ENCODE measurements at regions of chr1 and their contacts with region 1.

Region 1: GRCh38 chr1:64136752-64137411 is 66.5 kb upstream of the UBE2U start:
- DNase-seq: peak; percentile 49 to 93
- H3K4me3 ChIP-seq: no peak overlapping the region
- H3K27ac ChIP-seq: no peak overlapping the region
- H3K4me1 ChIP-seq: no peaks in the 10 kb centered on the region
- H3K27me3 ChIP-seq: no peaks in the 10 kb centered on the region
- CTCF ChIP-seq: peak; percentile 57 to 92 (median 72)
- EP300 ChIP-seq: no peak
- POLR2A ChIP-seq: no peak
- RAD21 ChIP-seq: peak; percentile 87 to 90

Region 2: DNA sequence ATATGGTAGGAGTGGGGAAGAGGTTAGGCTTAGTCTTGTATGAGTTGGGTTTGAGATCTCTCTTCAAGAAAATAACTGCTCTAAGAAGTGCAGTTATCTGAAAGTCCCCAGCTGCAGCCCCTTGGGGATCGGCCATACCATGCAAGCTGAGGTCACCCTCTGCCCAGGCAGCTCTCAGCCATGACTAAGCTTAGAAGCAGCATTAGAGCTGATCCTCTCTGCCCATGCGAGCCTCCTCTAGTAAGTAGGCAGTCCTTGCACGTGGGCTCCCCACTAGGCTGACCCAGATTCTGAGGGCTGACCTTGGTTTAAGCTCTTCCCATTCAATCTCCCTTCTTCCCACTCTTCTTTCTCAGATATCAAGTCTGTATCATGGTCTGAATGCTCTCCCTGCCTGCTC is 54.4 kb before region 1 on chr1:
- CTCF ChIA-PET with region 1: interaction called, 12 read pairs
- POLR2A ChIA-PET with region 1: no interaction called
- DNase-seq: peak in 1 of 2 experiments; percentile 10
- H3K4me3 ChIP-seq: no peak overlapping the region
- H3K27ac ChIP-seq: no peak overlapping the region
- H3K4me1 ChIP-seq: peaks cover 0 to under 1% (median 0%) of the 10 kb centered on the region in 4 experiments; a peak in 1 of 7 replicates
- H3K27me3 ChIP-seq: no peaks in the 10 kb centered on the region
- CTCF ChIP-seq: no peak
- EP300 ChIP-seq: no peak
- POLR2A ChIP-seq: no peak
- RAD21 ChIP-seq: no peak

Region 3: GRCh38 chr1:64116537-64116936 is 20.3 kb before region 1 on chr1:
- CTCF ChIA-PET with region 1: interaction called, 12 read pairs
- POLR2A ChIA-PET with region 1: no interaction called
- DNase-seq: no peak
- H3K4me3 ChIP-seq: no peak overlapping the region
- H3K27ac ChIP-seq: no peak overlapping the region
- H3K4me1 ChIP-seq: peaks cover 0 to 4% (median 0%) of the 10 kb centered on the region in 4 experiments; a peak in 2 of 7 replicates
- H3K27me3 ChIP-seq: no peaks in the 10 kb centered on the region
- CTCF ChIP-seq: no peak
- EP300 ChIP-seq: no peak
- POLR2A ChIP-seq: no peak
- RAD21 ChIP-seq: no peak

Region 4: DNA sequence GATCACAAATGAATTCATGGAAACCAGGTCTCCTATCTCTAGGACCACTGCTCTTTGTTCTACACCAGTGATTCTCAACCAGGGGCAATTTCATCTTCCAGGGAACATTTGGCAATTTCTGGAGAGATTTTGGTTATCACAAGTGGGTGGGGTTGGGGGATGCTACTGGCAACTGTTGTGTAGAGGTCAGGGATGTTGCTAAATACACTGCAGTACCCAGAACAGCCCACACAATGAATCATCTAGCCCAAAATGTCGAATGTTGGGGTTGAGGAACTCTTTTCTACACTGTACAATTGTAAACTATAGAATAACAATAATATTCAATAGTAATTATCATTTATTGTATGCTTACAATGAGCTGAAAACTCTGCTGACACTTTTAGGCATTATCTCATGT is 10.9 kb after region 1 on chr1:
- CTCF ChIA-PET with region 1: interaction called, 50 read pairs
- POLR2A ChIA-PET with region 1: interaction called, 4 read pairs
- DNase-seq: no peak
- H3K4me3 ChIP-seq: no peak overlapping the region
- H3K27ac ChIP-seq: no peak overlapping the region
- H3K4me1 ChIP-seq: peaks cover 0 to 2% (median under 1%) of the 10 kb centered on the region in 4 experiments; a peak in 2 of 7 replicates
- H3K27me3 ChIP-seq: no peaks in the 10 kb centered on the region
- CTCF ChIP-seq: no peak
- EP300 ChIP-seq: no peak
- POLR2A ChIP-seq: no peak
- RAD21 ChIP-seq: no peak

Region 5: GRCh38 chr1:64176659-64177058 is 39.8 kb after region 1 on chr1:
- CTCF ChIA-PET with region 1: no interaction called
- POLR2A ChIA-PET with region 1: no interaction called
- DNase-seq: no peak
- H3K4me3 ChIP-seq: no peak overlapping the region
- H3K27ac ChIP-seq: 0 out of 2 replicates have a peak overlapping the region, but pooled peaks have one; percentile 33
- H3K4me1 ChIP-seq: peaks cover 0 to 3% (median 0%) of the 10 kb centered on the region in 4 experiments; a peak in 1 of 7 replicates
- H3K27me3 ChIP-seq: no peaks in the 10 kb centered on the region
- CTCF ChIP-seq: no peak
- EP300 ChIP-seq: no peak
- POLR2A ChIP-seq: no peak
- RAD21 ChIP-seq: no peak